GM10248 (cell line): ENCODE measurements at regions of chr13 and their contacts with region 1.

Region 1: DNA sequence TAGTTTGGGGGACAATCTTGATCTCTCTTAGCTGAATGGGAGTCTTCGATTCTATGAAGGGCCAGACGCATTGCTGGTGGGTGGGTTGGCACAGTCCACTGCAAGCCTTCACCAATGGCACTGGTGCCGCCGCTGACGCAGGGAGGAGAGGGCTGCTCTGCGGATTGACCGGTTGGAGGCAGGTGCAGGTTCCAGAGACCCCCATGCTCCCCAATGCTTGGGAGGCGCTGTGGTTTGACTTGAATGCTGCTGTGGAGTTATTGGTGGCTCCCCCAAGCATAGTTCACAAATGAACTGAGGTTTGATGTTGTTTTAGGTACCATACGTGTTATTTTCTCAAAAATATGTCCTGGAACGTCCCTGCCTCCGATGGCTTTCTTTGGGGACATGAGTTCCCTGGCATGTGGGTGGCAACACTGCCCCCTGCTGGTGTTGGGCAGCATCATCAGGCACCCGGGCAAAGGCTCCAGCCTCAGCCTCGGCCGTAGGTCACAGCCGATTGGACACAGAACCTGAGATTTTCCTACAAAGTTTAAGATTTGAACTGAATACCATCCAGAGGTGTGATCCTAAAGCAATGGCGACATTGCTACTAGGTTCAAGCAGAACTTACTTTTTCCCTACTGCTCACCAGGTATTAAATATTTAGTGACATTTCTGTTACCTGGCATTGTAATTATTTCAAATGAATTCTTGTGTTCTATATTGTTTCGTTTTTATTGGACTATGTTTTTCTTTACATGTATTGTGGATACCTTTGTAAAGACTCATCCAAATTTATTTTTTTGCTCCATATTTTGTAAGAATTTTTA is 95.5 kb downstream of the ANKRD10 start:
- DNase-seq: peak; percentile 90
- CTCF ChIP-seq: peak; percentile 88

Region 2: GRCh38 chr13:110644892-110645521 is 174.4 kb before region 1 on chr13:
- CTCF ChIA-PET with region 1: interaction called, 13 read pairs
- POLR2A ChIA-PET with region 1: no interaction called
- DNase-seq: peak; percentile 65
- CTCF ChIP-seq: peak; percentile 48

Region 3: GRCh38 chr13:110799246-110800236 is 19.9 kb before region 1 on chr13:
- CTCF ChIA-PET with region 1: interaction called, 10 read pairs
- POLR2A ChIA-PET with region 1: no interaction called
- DNase-seq: no peak
- CTCF ChIP-seq: no peak